Activated T-helper 1 cell treated with anti-CD3 and anti-CD28 coated beads, Interleukin-12 subunit alpha, Interleukin-12 subunit beta, Interleukin-2, Interleukin-4 antibody, amounts not matched to agents 30 ng/mL and 10 ng/mL and 1 ng/mL, durations not matched to agents 14 hours and 24 hours and 36 hours (primary cell): ENCODE measurements at regions of chr1 and their contacts with region 1.

Region 1: DNA sequence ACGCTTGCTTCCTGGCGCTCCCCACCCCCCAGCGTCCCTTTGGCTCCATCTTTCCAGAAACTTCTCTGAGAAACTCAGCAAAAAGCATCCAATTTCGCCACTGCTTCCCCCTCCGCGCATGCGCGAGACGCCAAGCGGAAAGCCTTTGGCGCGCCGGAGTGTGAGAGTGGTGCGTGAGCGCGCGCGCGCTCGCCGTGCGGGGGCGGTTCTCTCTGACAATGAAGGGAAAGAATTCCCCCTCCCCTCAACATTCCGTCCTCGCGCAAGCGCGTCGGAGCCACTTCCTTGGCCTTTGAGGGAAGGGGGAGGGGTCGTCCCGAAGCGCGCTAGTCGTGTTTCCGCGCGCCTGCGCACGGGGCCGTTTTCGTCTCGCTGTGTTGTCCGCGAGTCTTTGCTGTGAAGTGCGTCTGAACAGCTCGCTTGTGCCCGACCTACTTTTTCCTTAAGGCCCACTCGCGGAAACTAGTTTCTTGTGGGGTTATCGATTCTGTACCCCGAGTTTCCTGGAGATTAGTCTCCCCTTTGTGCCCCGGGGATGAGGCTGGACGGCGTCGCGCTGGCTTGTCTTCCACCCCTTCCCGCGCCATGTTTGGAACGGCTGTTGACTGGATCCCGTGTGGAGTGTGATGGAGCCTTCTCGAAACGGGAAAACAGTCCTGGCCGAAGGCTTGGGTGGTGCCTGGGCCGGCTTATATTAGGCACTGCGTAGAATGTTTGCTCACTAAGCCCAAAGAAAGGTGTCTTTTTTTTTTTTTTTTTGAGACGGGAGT is 11.6 kb upstream of the SPEN start:
- DNase-seq: peak; percentile 99
- H3K4me3 Mint-ChIP-seq: peak overlapping the region; percentile 95
- H3K27ac Mint-ChIP-seq: peak overlapping the region; percentile 99
- H3K4me1 Mint-ChIP-seq: peaks cover 22% of the 10 kb centered on the region
- H3K27me3 Mint-ChIP-seq: peaks cover 3% of the 10 kb centered on the region

Region 2: DNA sequence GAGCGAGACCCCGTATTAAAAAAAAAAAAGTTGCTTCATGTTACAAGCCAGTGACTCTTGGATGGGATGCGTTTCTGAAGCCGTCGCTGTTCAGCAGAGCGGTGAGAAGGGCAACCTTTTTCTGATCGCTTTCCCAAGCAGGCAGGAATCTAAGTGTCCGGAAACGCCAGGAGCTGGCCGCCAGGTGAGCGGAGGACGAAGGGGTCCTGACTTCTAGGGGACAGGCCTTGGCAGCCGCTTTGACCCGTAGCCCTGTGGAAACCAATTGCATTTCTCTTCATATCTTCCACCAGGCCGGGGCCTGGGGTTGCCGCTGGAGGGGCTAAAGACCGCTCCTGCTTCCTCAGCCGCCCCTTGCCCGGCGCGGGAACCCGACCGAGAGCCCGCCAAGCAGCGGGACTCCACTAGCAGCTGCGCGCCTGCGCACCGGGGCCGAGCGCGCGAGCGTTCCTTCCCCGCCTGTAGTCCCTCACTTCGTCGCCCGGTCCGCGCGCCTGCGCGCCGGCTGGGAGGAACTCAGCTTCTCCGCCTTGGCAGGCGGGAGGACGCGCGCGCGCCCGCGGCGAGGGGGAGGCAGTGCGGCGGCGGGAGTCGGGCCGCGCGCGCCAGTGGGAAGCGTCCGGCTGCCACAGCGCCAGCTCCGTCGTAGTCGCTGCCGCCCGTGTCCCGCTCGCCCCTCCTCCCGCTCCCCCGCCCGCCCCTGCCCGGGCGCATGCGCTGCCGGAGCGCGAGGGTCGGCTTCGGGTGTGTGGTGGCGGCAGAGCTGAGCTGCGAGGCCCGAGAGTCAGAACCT is 11.4 kb after region 1 on chr1 and contains the start of gene SPEN:
- intact Hi-C with region 1: loop called (anchors 1 kb)
- DNase-seq: peak; percentile 98
- H3K4me3 Mint-ChIP-seq: peak within 1 kb of the TSS; percentile 94
- H3K27ac Mint-ChIP-seq: peak within 1 kb of the TSS; percentile 95
- H3K4me1 Mint-ChIP-seq: peaks cover 41% of the 10 kb centered on the region
- H3K27me3 Mint-ChIP-seq: no peaks in the 10 kb centered on the region
- total RNA-seq, gene SPEN: 81.9 and 87.6 TPM in 2 replicates

Region 3: GRCh38 chr1:15949453-15950245 is 113.7 kb after region 1 on chr1:
- intact Hi-C with region 1: loop called (anchors 1 kb)
- DNase-seq: peak; percentile 53
- H3K4me3 Mint-ChIP-seq: peak overlapping the region; percentile 73
- H3K27ac Mint-ChIP-seq: peak overlapping the region; percentile 98
- H3K4me1 Mint-ChIP-seq: peaks cover 77% of the 10 kb centered on the region
- H3K27me3 Mint-ChIP-seq: no peaks in the 10 kb centered on the region

Region 4: DNA sequence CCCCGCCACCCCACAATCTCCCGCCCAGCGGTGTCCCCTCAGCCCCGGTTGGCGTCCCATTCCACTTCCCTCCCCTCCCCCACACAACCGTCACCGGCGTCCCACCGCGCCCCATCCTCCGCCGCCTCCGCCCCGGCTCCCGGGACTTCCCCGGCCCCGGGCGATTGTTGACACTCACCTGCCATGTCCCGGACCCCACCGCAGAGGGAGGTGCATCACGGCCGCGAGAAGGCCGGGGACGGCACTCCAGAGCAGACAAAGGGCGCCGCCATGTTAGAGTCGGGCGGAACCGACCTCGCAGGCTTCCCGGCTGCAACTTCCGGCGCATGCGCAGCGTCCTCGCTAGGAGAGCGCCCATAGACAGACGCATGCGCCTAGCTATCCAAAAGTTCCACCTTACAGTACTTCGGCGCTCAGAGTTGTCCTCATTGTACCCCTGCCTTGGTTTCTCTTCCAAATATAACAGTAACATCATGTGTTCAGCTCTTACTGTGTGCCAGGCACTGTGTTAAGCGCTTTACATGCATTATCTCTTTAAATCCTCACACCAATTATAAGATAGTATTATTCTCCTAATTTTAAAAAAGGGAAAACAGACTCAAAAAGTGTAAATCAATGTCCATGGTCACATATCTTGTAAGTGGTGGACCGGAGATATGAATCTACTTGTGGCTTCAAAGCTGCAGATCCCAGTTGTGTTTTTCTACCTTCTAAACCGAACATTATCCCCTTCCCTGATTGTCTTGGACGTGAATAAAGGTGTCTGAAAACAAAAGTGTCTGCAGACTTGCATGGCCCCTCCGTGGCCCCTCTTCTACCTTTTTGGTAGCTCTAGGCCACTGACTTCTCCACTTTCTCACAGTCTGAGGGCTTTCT is 140.1 kb after region 1 on chr1 and contains the start of gene ZBTB17:
- intact Hi-C with region 1: loop called (anchors 1 kb)
- DNase-seq: peak; percentile 94
- H3K4me3 Mint-ChIP-seq: peak within 1 kb of the TSS; percentile 89
- H3K27ac Mint-ChIP-seq: peak within 1 kb of the TSS; percentile 93
- H3K4me1 Mint-ChIP-seq: peaks cover 51% of the 10 kb centered on the region
- H3K27me3 Mint-ChIP-seq: peaks cover 2% of the 10 kb centered on the region
- total RNA-seq, gene ZBTB17: 62.6 and 68.8 TPM in 2 replicates

Region 5: DNA sequence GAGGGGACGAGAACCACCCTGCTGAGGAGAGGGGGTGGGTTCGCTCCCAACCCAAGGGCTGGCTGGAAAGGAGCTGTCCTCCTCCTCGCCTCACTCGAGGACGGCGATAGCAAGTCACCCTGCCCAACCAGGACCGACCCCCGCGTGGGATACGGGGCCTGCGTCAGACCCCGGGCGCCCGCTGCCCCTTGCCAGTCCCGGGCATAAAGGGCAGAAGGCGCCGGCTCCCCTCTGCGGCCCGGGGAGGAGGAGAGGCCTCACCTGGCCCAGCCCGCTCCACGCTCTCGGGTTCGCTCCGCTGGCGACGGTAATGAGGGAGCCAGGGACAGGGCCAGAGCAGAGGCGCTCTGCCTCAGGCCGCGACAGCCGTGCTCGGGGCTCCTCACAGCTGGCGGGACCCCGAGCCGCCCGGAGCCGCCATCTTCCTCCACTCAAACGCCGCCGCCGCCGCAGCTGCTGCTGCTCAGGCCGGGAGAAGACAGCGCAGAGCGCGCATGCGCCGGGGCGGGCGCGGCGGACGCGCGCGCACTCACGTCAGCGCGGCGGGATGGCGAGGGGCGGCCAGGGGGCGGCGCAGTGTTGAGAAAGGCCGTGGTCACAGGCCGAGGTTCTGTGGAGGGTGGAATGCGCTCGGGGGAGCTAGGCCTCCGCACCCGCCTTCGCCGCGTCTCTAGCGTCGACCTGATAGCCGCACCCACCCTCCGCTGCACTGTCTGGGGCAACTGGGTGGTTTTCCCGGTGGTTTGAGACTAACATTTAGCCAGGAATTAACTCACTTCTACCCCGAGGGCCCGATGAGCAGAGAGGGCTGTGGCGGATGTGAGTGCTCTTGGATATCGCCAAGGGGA is 516.3 kb after region 1 on chr1 and contains the start of gene FBXO42:
- intact Hi-C with region 1: loop called (anchors 5 kb)
- DNase-seq: peak; percentile 94
- H3K4me3 Mint-ChIP-seq: peak within 1 kb of the TSS; percentile 97
- H3K27ac Mint-ChIP-seq: peak within 1 kb of the TSS; percentile 88
- H3K4me1 Mint-ChIP-seq: peaks cover 29% of the 10 kb centered on the region
- H3K27me3 Mint-ChIP-seq: no peaks in the 10 kb centered on the region
- total RNA-seq, gene FBXO42: 17.1 and 19.1 TPM in 2 replicates